ENCODE measurements at regions of chr7 and their contacts with region 1.

Region 1: DNA sequence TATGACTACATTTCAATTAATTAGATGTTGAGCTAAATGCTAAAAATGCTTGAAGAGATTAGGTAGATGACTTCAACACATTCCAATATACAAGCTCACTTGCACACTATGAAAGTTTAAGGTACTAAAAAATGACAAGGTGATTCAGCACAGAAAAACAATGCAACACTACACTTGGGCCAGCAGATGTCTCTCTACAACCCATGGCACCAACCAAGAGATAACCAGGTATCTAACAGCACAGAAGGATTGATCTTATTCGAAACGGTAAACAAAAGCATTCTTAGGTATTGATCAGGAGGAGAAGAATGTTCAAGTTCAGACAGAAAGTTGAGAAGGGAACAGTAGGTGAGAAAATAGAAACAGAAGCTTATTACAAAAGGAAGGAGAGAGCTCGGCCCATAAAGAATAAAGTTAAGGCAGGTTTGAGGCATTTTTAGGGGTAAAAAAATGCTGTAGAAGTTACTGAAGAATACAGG is 248.2 kb upstream of the KLF14 start:
- DNase-seq: peak in 4 of 14 experiments; percentile 31 to 79 (median 74)
- ATAC-seq: peak; percentile 71
- H3K4me3 ChIP-seq: peak overlapping the region; percentile 10
- H3K4me3 Mint-ChIP-seq: no peak overlapping the region
- H3K27ac ChIP-seq: peak overlapping the region; percentile 1 to 75
- H3K27ac Mint-ChIP-seq: no peak overlapping the region
- H3K4me1 ChIP-seq: peaks cover 55% of the 10 kb centered on the region
- H3K4me1 Mint-ChIP-seq: peaks cover 10% of the 10 kb centered on the region
- H3K27me3 ChIP-seq: no peaks in the 10 kb centered on the region
- H3K27me3 Mint-ChIP-seq: no peaks in the 10 kb centered on the region
- CTCF ChIP-seq: peak; percentile 79

Region 2: GRCh38 chr7:130912862-130913631 is 69.2 kb before region 1 on chr7:
- CTCF ChIA-PET with region 1: no interaction called
- POLR2A ChIA-PET with region 1: interaction called, 10 read pairs
- intact Hi-C with region 1: no loop called
- DNase-seq: peak; percentile 56 to 96 (median 72)
- ATAC-seq: peak; percentile 90
- H3K4me3 ChIP-seq: peak overlapping the region; percentile 61
- H3K4me3 Mint-ChIP-seq: peak overlapping the region; percentile 92
- H3K27ac ChIP-seq: peak overlapping the region; percentile 85 to 92
- H3K27ac Mint-ChIP-seq: peak overlapping the region; percentile 92
- H3K4me1 ChIP-seq: peaks cover 66% of the 10 kb centered on the region
- H3K4me1 Mint-ChIP-seq: peaks cover 93% of the 10 kb centered on the region
- H3K27me3 ChIP-seq: no peaks in the 10 kb centered on the region
- H3K27me3 Mint-ChIP-seq: no peaks in the 10 kb centered on the region
- CTCF ChIP-seq: no peak

Region 3: DNA sequence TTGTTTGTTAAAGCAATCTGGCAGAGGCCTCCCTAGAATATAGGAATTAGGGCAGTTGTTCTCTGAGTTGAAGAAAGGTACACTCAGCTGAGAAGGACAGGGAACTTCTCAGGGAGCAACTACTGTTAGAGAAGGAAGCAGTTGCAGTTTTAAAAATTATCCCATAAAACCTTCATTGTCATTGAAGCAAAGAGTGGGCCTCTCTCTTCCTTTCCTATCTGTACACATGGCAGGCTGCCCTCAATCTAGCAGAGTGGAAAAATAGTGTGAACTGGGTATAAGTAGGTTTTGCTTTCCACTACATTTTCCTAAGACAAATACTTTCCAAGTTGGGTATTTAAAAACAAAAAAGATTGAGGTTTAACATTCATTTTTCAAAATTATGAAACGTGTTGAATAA is 11.5 kb before region 1 on chr7:
- CTCF ChIA-PET with region 1: interaction called, 16 read pairs
- POLR2A ChIA-PET with region 1: no interaction called
- intact Hi-C with region 1: no loop called
- DNase-seq: no peak
- ATAC-seq: no peak
- H3K4me3 ChIP-seq: no peak overlapping the region
- H3K4me3 Mint-ChIP-seq: no peak overlapping the region
- H3K27ac ChIP-seq: no peak overlapping the region
- H3K27ac Mint-ChIP-seq: peak overlapping the region; percentile 31
- H3K4me1 ChIP-seq: peaks cover 35% of the 10 kb centered on the region
- H3K4me1 Mint-ChIP-seq: peaks cover 85% of the 10 kb centered on the region
- H3K27me3 ChIP-seq: no peaks in the 10 kb centered on the region
- H3K27me3 Mint-ChIP-seq: no peaks in the 10 kb centered on the region
- CTCF ChIP-seq: no peak

Region 4: DNA sequence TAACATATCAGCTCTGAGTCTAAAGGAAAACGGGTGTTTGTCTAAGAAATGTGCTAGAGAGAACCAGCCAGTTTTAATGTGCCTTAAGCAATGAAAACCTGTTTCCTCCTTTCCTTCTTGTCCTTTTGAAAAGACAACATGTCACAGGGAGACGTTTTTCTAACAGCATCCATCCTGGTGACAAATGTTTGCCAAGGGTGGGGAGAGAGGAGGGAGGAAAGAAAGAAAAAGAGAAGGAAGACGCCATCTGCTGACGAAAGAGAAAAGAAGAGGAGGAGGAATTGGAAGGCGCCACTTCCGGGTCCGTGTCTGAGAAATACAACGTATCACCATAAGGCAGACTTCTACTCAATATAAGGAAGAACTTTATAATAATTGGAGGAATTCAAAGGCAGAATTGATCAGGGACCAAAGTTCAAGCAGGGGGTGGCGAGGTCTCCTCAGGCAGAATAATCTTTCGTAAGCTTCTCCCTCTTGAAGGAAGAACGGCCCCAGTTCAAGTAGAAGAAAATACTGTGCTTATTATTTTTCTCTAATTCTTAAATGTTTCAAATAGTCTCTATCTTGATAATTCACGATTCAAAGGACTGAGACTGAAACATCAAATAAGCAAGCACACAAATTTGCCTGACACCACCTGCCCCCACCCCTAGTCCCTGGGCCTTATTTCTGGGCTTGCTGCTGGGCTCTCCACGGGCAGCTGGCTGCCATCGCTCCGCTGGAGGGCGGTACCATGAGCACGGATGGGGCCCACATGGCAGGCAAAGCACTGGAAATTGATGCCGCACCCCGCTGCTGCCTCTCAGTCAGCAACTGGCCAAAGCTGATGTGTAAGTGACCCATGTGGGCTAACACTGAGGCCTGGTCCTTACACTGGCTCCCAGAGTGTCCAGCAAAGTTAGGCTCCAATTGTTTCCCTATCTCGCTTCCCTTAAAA is 25.5 kb after region 1 on chr7:
- CTCF ChIA-PET with region 1: interaction called, 4 read pairs
- POLR2A ChIA-PET with region 1: interaction called, 9 read pairs
- intact Hi-C with region 1: loop called (anchors 1 to 2 kb)
- DNase-seq: peak in 11 of 14 experiments; percentile 27 to 83 (median 48)
- ATAC-seq: peak; percentile 60
- H3K4me3 ChIP-seq: no peak overlapping the region
- H3K4me3 Mint-ChIP-seq: peak overlapping the region; percentile 40
- H3K27ac ChIP-seq: peak overlapping the region; percentile 36 to 71
- H3K27ac Mint-ChIP-seq: peak overlapping the region; percentile 76
- H3K4me1 ChIP-seq: peaks cover 61% of the 10 kb centered on the region
- H3K4me1 Mint-ChIP-seq: peaks cover 93% of the 10 kb centered on the region
- H3K27me3 ChIP-seq: no peaks in the 10 kb centered on the region
- H3K27me3 Mint-ChIP-seq: no peaks in the 10 kb centered on the region
- CTCF ChIP-seq: peak; percentile 77

Region 5: DNA sequence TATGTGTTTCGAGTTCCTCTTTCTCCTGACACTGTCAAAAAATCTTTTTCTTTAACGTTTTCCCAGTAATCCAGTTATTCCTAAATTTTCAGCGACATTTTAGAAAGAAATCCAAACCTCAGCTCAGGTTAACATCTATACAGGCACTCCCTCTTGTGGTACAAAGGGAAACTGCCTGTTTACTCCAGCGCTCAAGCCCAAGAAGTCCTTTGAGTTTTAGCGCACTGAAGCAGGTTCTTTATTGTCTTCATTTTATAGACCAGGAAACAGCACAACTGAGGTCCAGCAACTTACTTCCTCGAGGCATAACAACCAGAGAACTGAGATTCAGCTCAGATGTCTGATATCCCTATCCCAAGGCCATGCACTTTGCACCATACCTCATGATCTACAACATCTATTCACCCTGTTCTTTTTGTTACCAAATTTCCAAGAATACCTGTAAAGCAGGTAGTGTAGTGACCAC is 58.3 kb after region 1 on chr7:
- CTCF ChIA-PET with region 1: interaction called, 8 read pairs
- POLR2A ChIA-PET with region 1: interaction called, 8 read pairs
- intact Hi-C with region 1: loop called (anchors 1 to 10 kb)
- DNase-seq: peak in 6 of 14 experiments; percentile 31 to 81 (median 65)
- ATAC-seq: peak; percentile 58
- H3K4me3 ChIP-seq: no peak overlapping the region
- H3K4me3 Mint-ChIP-seq: peak overlapping the region; percentile 47
- H3K27ac ChIP-seq: no peak overlapping the region
- H3K27ac Mint-ChIP-seq: peak overlapping the region; percentile 72
- H3K4me1 ChIP-seq: peaks cover 23% of the 10 kb centered on the region
- H3K4me1 Mint-ChIP-seq: peaks cover 80% of the 10 kb centered on the region
- H3K27me3 ChIP-seq: no peaks in the 10 kb centered on the region
- H3K27me3 Mint-ChIP-seq: no peaks in the 10 kb centered on the region
- CTCF ChIP-seq: peak; percentile 95

Region 6: GRCh38 chr7:131164025-131164899 is 182.1 kb after region 1 on chr7:
- CTCF ChIA-PET with region 1: no interaction called
- POLR2A ChIA-PET with region 1: no interaction called
- intact Hi-C with region 1: no loop called
- DNase-seq: no peak
- ATAC-seq: no peak
- H3K4me3 ChIP-seq: no peak overlapping the region
- H3K4me3 Mint-ChIP-seq: no peak overlapping the region
- H3K27ac ChIP-seq: no peak overlapping the region
- H3K27ac Mint-ChIP-seq: no peak overlapping the region
- H3K4me1 ChIP-seq: no peaks in the 10 kb centered on the region
- H3K4me1 Mint-ChIP-seq: no peaks in the 10 kb centered on the region
- H3K27me3 ChIP-seq: no peaks in the 10 kb centered on the region
- H3K27me3 Mint-ChIP-seq: no peaks in the 10 kb centered on the region
- CTCF ChIP-seq: no peak

Measured in CD4-positive, alpha-beta T cell (primary cell).